Caco-2 (cell line): ENCODE measurements at regions of chr7 and their contacts with region 1.

Region 1: GRCh38 chr7:129698516-129699418 is 87.2 kb downstream of the NRF1 start:
- DNase-seq: peak in 1 of 2 experiments; percentile 21
- H3K4me3 ChIP-seq: no peak overlapping the region
- H3K4me3 Mint-ChIP-seq: no peak overlapping the region
- H3K27ac Mint-ChIP-seq: peak overlapping the region; percentile 73
- H3K4me1 ChIP-seq: peaks cover 23% of the 10 kb centered on the region
- H3K4me1 Mint-ChIP-seq: peaks cover 20% of the 10 kb centered on the region
- H3K27me3 ChIP-seq: no peaks in the 10 kb centered on the region
- H3K27me3 Mint-ChIP-seq: no peaks in the 10 kb centered on the region
- CTCF ChIP-seq: no peak

Region 2: GRCh38 chr7:129678606-129679005 is 20.2 kb before region 1 on chr7:
- CTCF ChIA-PET with region 1: no interaction called
- POLR2A ChIA-PET with region 1: no interaction called
- intact Hi-C with region 1: loop called (anchors 1 kb)
- DNase-seq: no peak
- H3K4me3 ChIP-seq: no peak overlapping the region
- H3K4me3 Mint-ChIP-seq: no peak overlapping the region
- H3K27ac Mint-ChIP-seq: no peak overlapping the region
- H3K4me1 ChIP-seq: no peaks in the 10 kb centered on the region
- H3K4me1 Mint-ChIP-seq: no peaks in the 10 kb centered on the region
- H3K27me3 ChIP-seq: no peaks in the 10 kb centered on the region
- H3K27me3 Mint-ChIP-seq: no peaks in the 10 kb centered on the region
- CTCF ChIP-seq: no peak